ENCODE measurements at regions of chr3 and their contacts with region 1.

Region 1: GRCh38 chr3:58167431-58168351 is 43.1 kb downstream of the DNASE1L3 start:
- DNase-seq: peak in 5 of 6 donors; percentile 59 to 88 (median 81)
- ATAC-seq: peak in 3 of 4 donors; percentile 34 to 43 (median 43)
- H3K4me3 ChIP-seq: no peak overlapping the region
- H3K27ac ChIP-seq: no peak overlapping the region
- H3K4me1 ChIP-seq: peaks cover 31 to 42% (median 37%) of the 10 kb centered on the region in 3 donors
- H3K27me3 ChIP-seq: no peaks in the 10 kb centered on the region
- CTCF ChIP-seq: peak; percentile 75 to 95 (median 82)

Region 2: GRCh38 chr3:58013973-58014649 is 153.6 kb before region 1 on chr3:
- intact Hi-C with region 1: loop called in 2 of 3 experiments (anchors 5 to 10 kb)
- DNase-seq: no peak
- ATAC-seq: peak in 1 of 4 donors; percentile 14
- H3K4me3 ChIP-seq: no peak overlapping the region
- H3K27ac ChIP-seq: no peak overlapping the region
- H3K4me1 ChIP-seq: peaks cover 30 to 42% (median 31%) of the 10 kb centered on the region in 3 donors
- H3K27me3 ChIP-seq: no peaks in the 10 kb centered on the region
- CTCF ChIP-seq: no peak

Region 3: DNA sequence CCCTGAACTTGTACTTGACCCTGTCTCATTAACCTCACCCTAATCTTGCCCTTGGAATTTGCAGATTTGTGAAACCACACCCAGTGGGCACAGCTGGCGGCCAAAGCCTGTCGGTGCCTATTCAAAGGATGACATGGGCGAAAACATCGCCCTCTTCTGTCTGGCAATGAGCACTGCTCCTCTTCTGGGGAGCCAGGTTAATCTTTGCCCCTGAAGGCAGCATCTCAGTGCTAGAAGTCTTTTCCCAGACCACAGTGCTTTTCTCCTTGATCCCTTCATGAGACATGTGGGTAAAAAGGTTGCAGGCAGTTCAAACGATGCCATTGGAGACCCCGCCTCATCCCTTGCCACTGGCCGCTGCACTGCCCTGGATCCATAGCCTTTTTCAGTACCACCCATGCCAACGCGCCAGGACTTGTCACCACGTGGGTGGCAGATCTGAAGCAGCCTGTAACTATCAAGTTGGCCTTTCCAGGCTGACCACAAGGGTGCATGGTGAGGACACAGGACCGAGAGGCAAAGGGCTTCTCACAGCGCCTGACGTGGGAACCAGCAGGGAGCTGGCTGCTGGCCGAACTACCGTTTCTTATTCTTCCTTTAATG is 49.6 kb after region 1 on chr3:
- intact Hi-C with region 1: no loop called
- DNase-seq: peak; percentile 59 to 77 (median 68)
- ATAC-seq: peak; percentile 91 to 97 (median 97)
- H3K4me3 ChIP-seq: no peak overlapping the region
- H3K27ac ChIP-seq: peak overlapping the region in 1 of 4 donors; percentile 29
- H3K4me1 ChIP-seq: peaks cover 0 to 8% (median 0%) of the 10 kb centered on the region in 3 donors
- H3K27me3 ChIP-seq: no peaks in the 10 kb centered on the region
- CTCF ChIP-seq: peak; percentile 58 to 80 (median 68)